Head of caudate nucleus (tissue), 42 donors: ENCODE measurements at regions of chr2 and their contacts with region 1.

Region 1: GRCh38 chr2:101697124-101698013 is at the start of gene MAP4K4:
- DNase-seq: peak; percentile 53 to 94 (median 86)

Region 2: DNA sequence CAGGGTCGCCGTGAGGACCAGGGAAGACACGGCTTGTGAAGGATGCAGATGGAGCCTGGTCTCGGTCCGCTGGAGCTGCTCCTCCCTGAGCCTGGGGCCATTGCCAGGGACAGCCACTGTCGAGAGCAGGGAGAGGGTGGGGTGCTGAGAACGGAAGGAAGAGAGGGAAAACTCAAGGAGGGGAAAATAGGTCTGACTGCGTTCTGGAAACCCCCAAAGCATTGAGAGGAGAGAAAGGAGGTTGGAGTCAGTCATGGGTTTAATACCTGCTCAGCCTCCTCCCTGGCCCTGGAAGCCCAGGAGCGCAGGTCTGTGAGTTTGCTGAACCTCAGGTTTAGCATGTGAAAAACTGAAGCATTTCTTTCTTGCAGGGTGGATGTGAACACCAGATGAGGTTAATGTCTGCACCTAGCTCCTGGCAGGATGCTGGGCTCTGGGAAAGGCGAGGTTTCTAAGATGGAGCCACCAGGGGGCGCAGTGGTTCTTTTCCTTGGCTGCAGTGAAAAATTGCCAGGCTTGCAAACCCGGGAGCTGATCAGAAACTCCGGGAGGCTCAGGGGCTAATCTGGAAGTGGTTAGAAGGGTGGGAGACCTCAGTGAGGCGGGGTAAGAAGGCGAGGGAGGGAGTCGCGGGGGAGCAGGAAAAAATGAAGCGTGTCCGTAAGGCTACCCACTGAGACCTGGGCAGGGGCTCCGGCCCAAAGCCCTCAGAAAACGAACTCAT is 355.3 kb before region 1 on chr2:
- intact Hi-C with region 1: loop called (anchors 5 kb)
- DNase-seq: peak; percentile 54 to 96 (median 84)

Region 3: DNA sequence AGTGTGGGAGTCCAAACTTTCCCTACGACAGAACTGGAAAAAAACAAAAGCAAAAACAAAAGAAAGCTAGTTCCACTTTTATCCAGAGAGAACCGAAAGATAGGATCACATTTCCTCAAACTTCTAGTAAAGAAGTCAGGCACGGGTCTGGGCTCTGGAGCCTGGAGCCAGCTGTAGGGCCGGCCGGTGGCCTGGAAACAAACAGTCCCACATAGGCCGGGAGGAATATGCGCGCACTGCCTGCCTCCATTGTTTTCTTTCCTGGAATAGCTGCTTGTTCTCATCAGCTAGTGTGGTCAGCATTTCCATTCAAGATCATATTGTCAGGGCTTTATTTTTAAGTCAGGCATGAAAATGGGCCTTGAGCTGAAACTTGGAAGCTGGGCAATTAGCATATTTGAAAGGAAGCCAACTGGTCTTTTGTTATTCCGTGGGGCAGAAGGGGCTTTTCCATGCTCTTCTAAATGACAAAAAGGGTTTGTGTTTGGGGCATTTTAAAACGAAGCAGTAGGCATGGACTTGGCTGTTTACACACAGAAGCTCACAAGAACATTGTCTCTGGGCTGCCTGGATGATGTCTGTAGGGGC is 163.7 kb before region 1 on chr2:
- intact Hi-C with region 1: loop called (anchors 5 kb)
- DNase-seq: peak; percentile 70 to 94 (median 86)

Region 4: GRCh38 chr2:101736861-101737291 is 39.5 kb after region 1 on chr2:
- intact Hi-C with region 1: loop called (anchors 5 kb)
- DNase-seq: peak in 1 of 42 donors; percentile 40

Region 5: GRCh38 chr2:101781326-101781725 is 84.0 kb after region 1 on chr2:
- intact Hi-C with region 1: loop called (anchors 5 kb)
- DNase-seq: no peak

Region 6: DNA sequence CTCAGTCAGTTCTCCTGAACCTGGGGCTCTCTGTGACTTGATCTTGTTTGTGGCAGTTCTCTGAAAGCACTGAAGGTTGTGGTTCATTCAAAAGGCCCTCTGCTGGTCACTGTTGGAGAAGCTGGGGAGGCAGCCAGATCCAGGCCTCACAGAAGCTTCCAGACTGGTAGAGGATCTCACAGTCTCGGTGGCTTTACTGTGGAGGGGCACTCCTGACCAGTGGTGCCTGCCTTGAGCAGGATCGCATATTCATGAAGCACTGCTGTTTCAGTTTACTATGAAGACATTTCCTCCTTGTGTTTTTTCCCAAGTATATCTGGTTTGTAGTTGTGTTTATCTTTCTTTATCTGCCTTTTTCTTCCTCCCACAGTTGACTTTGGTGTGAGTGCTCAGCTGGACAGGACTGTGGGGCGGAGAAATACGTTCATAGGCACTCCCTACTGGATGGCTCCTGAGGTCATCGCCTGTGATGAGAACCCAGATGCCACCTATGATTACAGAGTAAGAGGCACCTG is 134.0 kb after region 1 on chr2:
- intact Hi-C with region 1: loop called (anchors 5 kb)
- DNase-seq: peak; percentile 44 to 92 (median 79)

Region 7: GRCh38 chr2:102473020-102473419 is 775.7 kb after region 1 on chr2 and contains the start of gene SLC9A4:
- intact Hi-C with region 1: no loop called
- DNase-seq: peak in 41 of 42 donors; percentile 5 to 77 (median 53)